Left cardiac atrium (tissue), 4 donors: ENCODE measurements at regions of chr18 and their contacts with region 1.

Region 1: DNA sequence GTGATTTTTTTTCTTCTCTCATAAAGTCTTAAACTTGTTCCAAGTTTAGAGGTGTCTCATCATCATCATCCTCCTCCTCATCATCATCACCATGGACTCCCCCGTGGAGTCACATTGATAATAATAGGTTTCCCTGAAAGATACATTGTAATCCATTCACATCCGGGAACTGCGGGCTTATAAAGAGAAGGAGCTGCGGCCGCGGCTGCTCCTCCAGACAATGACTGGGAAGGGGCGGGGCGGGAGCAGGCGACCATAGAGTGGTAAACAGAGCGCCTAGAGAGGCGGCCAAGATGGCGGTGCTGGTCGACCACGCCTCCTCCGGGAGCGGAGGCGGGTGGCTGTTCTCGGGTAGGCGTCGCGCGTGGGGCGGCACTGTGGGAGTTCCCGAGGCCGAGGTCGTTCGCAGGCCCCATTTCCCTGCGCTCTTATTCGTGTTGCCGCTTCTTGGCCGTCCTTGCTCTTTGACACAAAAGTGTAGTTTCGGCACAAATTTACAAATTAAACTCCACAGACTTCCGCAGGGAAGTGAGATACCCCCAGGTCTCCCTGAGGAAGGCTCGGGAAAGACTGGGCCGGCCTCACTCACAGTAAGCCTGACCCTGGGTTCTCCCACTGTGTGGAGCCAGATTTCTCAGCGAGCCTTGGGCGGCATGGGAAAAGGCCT is 1.8 kb upstream of the TCF4 start:
- DNase-seq: peak; percentile 97
- ATAC-seq: peak; percentile 97 to 98

Region 2: GRCh38 chr18:55343396-55344073 is 246.2 kb before region 1 on chr18:
- intact Hi-C with region 1: loop called in 1 of 2 experiments (anchors 10 kb)
- DNase-seq: no peak
- ATAC-seq: peak; percentile 46 to 57

Region 3: DNA sequence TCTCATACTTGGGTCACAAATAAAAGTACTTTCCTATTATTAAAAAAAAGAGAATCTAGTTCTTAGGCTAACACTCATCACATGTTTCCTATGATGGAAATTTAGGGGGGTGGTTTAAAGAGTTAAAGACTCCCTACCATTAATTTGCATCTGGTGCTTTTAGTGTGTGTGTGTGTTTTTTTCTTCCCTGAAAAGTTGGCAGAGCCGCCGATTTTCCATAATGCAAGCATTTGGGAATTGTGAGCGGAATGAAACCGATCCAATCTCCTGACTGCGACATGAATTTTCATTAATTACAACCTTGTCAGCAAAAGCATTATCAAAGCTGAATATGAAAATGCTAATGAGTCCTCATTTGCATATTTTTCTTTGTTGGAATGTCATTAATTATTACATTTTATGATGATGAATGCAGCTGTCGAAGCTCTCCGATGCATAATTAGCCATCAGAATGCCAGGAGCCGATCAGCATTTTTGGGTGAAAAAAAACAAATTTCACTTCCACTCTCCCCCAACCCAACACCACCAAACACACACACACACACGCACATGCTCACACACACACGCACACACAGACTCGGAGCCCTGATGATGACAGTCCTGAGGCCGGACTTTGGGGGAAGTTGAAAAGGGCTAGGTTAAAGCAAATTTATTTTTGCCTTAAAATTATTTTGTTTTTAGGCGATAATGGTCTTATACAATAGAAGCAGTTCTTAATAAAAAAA is 167.1 kb before region 1 on chr18:
- intact Hi-C with region 1: loop called (anchors 5 to 10 kb)
- DNase-seq: peak; percentile 61
- ATAC-seq: peak; percentile 55 to 60

Region 4: DNA sequence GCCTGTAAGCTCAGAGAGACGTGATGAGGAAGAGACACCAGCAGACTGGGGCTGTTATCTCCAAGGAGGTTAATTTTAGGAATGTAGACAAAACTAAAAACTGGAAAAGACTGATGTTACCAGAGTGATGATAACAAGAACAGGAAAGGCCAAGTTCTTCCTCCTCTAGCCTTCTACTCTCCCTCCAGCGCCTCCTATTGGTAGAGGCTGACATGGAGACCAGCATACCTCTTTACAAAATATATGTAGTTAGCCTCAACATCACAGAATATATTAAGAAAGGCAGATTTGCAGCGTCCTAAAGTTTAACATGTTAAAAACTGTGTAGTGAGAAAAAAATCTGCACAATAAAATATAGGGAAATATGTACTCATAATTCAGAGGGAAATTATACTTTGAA is 67.7 kb before region 1 on chr18:
- intact Hi-C with region 1: loop called (anchors 10 kb)
- DNase-seq: no peak
- ATAC-seq: no peak

Region 5: DNA sequence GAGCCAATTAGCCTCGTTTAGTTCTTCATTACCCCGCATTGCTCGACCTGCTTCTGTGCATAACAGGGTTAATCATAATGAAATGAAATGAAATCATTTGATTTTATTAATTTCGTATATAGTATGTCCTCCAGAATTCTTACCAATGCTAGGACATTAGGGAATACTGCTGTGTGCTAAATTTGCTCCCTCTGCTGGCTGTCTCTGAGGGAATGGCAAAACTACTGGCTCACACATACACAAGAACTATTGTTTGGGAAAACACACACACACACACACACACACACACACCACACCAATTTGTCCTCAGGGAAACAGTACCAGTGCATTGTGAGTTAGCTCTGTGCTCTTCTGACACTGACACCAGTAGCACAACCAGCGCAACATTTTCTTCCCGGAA is 271.5 kb after region 1 on chr18:
- intact Hi-C with region 1: loop called in 1 of 2 experiments (anchors 10 kb)
- DNase-seq: no peak
- ATAC-seq: no peak